ENCODE measurements at regions of chr5 and their contacts with region 1.

Region 1: DNA sequence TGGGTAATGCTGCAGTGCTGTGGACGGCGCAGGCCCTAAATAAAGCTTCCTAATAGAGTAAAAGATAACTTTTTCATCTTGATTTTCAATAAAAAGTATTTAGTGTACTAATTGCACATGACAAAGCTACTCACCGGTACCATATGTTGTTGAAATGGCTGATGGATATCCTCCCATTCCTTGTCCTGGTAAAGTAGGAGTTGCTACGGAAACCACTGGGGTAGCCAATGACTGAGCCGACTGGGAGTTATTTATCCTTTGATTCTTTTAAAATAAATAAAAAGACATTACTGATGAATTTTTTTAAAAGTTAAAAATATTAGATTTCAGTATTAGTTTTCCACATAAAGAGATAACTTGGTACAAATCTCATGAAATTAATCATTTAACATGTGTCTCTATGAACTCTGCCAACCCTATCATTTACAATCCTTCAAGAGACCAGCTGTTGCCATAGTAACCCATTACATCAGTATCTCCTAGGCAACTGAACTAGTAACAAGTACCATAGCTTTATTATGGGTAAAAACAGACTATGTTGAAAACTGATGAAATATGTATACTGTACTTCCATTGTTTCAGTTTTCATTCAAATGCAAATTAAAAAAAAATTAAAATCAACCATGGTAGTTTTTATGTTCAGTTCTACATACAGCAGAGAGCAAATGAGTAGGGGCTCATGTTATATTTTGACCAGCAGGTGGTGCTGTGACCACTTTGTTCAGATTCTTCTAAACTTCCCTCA is 153.7 kb downstream of the MEF2C start:
- DNase-seq: peak in 8 of 9 experiments; percentile 30 to 76 (median 58)
- ATAC-seq: peak; percentile 68
- H3K4me3 ChIP-seq: no peak overlapping the region
- H3K4me3 Mint-ChIP-seq: no peak overlapping the region
- H3K27ac ChIP-seq: no peak overlapping the region
- H3K27ac Mint-ChIP-seq: no peak overlapping the region
- H3K4me1 ChIP-seq: no peaks in the 10 kb centered on the region
- H3K4me1 Mint-ChIP-seq: peaks cover 5% of the 10 kb centered on the region
- H3K27me3 ChIP-seq: no peaks in the 10 kb centered on the region
- H3K27me3 Mint-ChIP-seq: peaks cover 15% of the 10 kb centered on the region
- CTCF ChIP-seq: peak; percentile 86

Region 2: DNA sequence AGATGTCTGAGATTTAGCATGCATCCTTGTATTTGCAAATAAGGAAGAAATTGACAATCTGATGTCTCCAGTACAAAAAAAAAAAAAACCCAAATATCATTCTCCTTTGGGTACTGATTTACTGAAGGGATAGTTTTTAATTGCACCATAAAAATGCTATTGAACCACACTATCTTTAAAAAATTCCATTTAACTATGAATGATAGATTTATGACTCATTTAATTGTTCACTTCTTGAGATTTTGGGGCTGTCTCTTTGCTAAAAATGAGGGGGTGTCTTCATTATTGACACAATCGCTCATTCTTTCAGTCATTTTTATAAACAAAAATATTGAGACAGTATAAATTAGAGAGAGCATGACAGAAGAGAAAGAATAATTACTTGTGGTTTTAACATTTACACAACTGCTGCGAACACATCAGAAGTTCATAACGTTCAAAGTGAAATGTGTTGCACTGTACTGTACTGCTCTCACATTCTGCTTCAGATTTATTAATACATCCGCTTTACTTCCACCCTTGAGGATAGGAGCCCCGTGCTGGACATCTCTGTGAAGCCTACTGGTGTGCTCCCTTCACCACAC is 11.4 kb after region 1 on chr5:
- CTCF ChIA-PET with region 1: interaction called, 31 read pairs
- POLR2A ChIA-PET with region 1: no interaction called
- intact Hi-C with region 1: no loop called
- DNase-seq: no peak
- ATAC-seq: no peak
- H3K4me3 ChIP-seq: no peak overlapping the region
- H3K4me3 Mint-ChIP-seq: no peak overlapping the region
- H3K27ac ChIP-seq: no peak overlapping the region
- H3K27ac Mint-ChIP-seq: no peak overlapping the region
- H3K4me1 ChIP-seq: no peaks in the 10 kb centered on the region
- H3K4me1 Mint-ChIP-seq: no peaks in the 10 kb centered on the region
- H3K27me3 ChIP-seq: no peaks in the 10 kb centered on the region
- H3K27me3 Mint-ChIP-seq: peaks cover 11% of the 10 kb centered on the region
- CTCF ChIP-seq: no peak

Region 3: GRCh38 chr5:88925692-88926490 is 196.6 kb after region 1 on chr5:
- CTCF ChIA-PET with region 1: no interaction called
- POLR2A ChIA-PET with region 1: no interaction called
- intact Hi-C with region 1: no loop called
- DNase-seq: no peak
- ATAC-seq: no peak
- H3K4me3 ChIP-seq: no peak overlapping the region
- H3K4me3 Mint-ChIP-seq: no peak overlapping the region
- H3K27ac ChIP-seq: no peak overlapping the region
- H3K27ac Mint-ChIP-seq: no peak overlapping the region
- H3K4me1 ChIP-seq: no peaks in the 10 kb centered on the region
- H3K4me1 Mint-ChIP-seq: no peaks in the 10 kb centered on the region
- H3K27me3 ChIP-seq: no peaks in the 10 kb centered on the region
- H3K27me3 Mint-ChIP-seq: no peaks in the 10 kb centered on the region
- CTCF ChIP-seq: no peak

Region 4: DNA sequence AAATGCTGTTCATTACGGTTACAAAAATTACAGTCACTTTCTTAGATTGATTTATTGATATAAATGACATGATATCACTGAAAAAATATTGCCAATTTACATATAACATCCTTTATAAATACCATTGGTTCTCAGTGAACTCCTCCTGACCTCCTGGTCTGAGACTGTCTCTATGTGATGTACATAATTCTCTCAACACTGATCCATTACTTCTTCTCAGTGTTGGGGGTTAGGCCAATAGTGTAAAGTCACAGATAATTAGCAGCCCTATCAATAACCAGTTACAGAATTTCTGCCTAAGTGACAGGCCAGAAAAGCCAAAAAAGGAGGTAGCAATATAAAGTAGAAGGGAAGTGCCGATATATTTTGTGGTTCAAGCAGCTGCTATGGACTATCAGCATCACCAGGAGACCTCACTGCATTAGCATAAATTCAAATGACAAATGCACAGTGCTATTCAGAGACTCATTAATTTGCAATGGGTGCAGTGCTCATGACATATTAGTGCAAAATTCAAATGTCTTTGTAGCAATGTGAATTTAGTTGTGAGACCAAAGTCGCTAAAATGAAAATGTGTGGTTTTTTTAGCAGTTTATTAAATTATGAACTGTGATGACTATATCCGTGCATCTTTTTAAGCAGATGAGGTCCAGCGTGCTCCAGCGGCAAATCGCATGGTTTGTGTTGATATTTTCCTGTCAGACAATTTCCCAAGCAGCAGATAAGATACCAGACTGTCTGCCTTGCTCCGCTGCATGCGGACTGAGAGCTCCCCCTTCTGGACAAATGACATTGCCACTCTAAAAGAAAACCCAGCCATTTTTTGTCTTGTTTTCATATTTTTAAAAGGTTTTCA is 1535.7 kb after region 1 on chr5:
- CTCF ChIA-PET with region 1: interaction called, 19 read pairs
- POLR2A ChIA-PET with region 1: no interaction called
- intact Hi-C with region 1: loop called (anchors 1 kb)
- DNase-seq: peak; percentile 2 to 59 (median 41)
- ATAC-seq: no peak
- H3K4me3 ChIP-seq: no peak overlapping the region
- H3K4me3 Mint-ChIP-seq: no peak overlapping the region
- H3K27ac ChIP-seq: no peak overlapping the region
- H3K27ac Mint-ChIP-seq: no peak overlapping the region
- H3K4me1 ChIP-seq: no peaks in the 10 kb centered on the region
- H3K4me1 Mint-ChIP-seq: peaks cover 2% of the 10 kb centered on the region
- H3K27me3 ChIP-seq: no peaks in the 10 kb centered on the region
- H3K27me3 Mint-ChIP-seq: peaks cover 11% of the 10 kb centered on the region
- CTCF ChIP-seq: peak; percentile 74

Region 5: GRCh38 chr5:90386099-90386710 is 1656.9 kb after region 1 on chr5:
- CTCF ChIA-PET with region 1: interaction called, 5 read pairs
- POLR2A ChIA-PET with region 1: no interaction called
- intact Hi-C with region 1: loop called (anchors 1 to 2 kb)
- DNase-seq: peak in 2 of 9 experiments; percentile 7 to 20
- ATAC-seq: no peak
- H3K4me3 ChIP-seq: no peak overlapping the region
- H3K4me3 Mint-ChIP-seq: no peak overlapping the region
- H3K27ac ChIP-seq: no peak overlapping the region
- H3K27ac Mint-ChIP-seq: no peak overlapping the region
- H3K4me1 ChIP-seq: no peaks in the 10 kb centered on the region
- H3K4me1 Mint-ChIP-seq: peaks cover 11% of the 10 kb centered on the region
- H3K27me3 ChIP-seq: peaks cover 0 to 4% of the 10 kb centered on the region in 2 experiments
- H3K27me3 Mint-ChIP-seq: peaks cover 13% of the 10 kb centered on the region
- CTCF ChIP-seq: peak; percentile 71

Region 6: DNA sequence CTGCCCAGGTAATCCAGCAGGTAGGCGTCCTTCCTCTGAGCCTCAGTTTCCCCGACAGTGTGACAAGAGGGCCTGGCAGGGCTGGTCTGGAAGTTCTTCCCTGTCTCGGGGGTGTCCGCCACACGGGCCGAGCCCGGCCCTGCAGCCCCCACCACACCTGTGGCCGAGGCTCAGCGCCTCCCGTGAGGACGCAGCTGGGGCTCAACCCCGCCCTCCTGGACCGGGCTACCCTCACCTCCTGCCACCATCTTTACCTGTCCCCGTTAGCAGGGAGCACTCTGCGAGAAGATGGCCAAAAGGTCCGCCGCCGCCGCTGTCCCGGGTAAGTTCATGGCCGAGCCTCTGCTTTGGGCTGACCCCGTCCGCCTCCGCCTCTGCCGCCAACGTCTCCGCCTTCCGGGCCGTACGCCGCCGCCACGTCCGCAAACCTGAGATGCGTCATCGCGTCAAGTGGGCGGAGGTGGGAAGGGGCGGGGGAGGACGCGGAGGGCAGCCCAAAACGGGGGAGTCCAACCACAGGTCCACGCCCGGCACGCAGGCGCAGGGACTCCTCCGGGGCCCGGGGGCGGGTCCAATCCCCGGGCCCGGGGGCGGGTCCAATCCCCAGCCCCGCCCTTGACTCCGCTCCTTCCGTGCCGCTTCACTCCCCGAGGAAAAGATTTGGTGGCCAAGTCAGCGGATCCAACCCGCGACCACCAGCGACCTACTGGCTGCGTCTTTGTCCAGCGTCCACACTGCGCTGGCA is 1800.1 kb after region 1 on chr5 and contains the start of gene LYSMD3:
- CTCF ChIA-PET with region 1: interaction called, 8 read pairs
- POLR2A ChIA-PET with region 1: no interaction called
- intact Hi-C with region 1: loop called (anchors 1 to 2 kb)
- DNase-seq: peak; percentile 94 to 99 (median 98)
- ATAC-seq: peak; percentile 91
- H3K4me3 ChIP-seq: peak within 1 kb of the TSS; percentile 90 to 98
- H3K4me3 Mint-ChIP-seq: peak within 1 kb of the TSS; percentile 99
- H3K27ac ChIP-seq: peak within 1 kb of the TSS; percentile 95 to 98
- H3K27ac Mint-ChIP-seq: peak within 1 kb of the TSS; percentile 99
- H3K4me1 ChIP-seq: peaks cover 27% of the 10 kb centered on the region
- H3K4me1 Mint-ChIP-seq: peaks cover 37% of the 10 kb centered on the region
- H3K27me3 ChIP-seq: no peaks in the 10 kb centered on the region
- H3K27me3 Mint-ChIP-seq: peaks cover 11% of the 10 kb centered on the region
- CTCF ChIP-seq: no peak
- total RNA-seq, gene LYSMD3: 25.8 to 30.9 TPM

Measured in CD8-positive, alpha-beta T cell (primary cell).